Cardiac septum (tissue), 1 donor: ENCODE measurements at regions of chr5 and their contacts with region 1.

Region 1: DNA sequence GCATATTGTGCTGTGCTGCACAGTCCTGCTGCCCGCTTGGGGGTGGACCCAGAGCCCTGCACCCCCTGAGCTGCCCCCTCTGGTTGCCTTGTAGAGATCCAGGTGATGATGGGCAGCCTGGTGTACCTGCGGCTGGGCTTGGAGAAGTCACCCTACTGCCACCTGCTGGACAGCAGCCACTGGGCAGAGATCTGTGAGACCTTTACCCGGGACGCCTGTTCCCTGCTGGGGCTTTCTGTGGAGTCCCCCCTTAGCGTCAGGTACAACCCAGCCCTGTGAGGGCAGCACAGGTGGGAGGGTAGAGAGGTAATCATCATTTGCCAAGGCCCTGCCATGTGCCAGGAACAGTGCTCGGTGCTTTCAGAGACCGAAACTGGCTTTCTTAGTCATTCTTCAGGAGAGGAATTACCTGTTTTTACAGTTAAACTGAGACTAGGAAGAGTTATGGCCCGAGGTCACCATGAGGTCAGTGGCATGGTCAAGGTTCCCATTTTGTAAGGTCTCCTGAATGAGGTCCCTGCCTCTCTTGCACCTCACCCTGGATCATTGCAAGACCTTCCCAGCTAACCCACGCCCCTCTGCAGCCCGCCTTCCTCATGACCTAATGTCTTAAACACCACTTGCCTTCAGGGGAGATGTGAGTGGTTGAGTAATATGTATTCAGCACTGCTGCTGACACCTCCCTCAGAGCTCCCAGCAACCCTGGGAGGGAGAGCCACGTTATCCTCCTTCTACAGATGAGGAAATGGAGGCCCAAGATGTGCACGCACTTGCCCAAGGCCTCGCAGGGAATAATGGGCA is 7.5 kb downstream of the NHP2 start:
- DNase-seq: no peak

Region 2: GRCh38 chr5:178113199-178113787 is 32.9 kb before region 1 on chr5 and contains the start of gene N4BP3:
- intact Hi-C with region 1: loop called (anchors 5 kb)
- DNase-seq: no peak
- total RNA-seq, gene N4BP3: 2.0 TPM

Region 3: GRCh38 chr5:178165585-178165984 is 19.4 kb after region 1 on chr5:
- intact Hi-C with region 1: no loop called
- DNase-seq: no peak